Calu3 (cell line): ENCODE measurements at regions of chr15 and their contacts with region 1.

Region 1: DNA sequence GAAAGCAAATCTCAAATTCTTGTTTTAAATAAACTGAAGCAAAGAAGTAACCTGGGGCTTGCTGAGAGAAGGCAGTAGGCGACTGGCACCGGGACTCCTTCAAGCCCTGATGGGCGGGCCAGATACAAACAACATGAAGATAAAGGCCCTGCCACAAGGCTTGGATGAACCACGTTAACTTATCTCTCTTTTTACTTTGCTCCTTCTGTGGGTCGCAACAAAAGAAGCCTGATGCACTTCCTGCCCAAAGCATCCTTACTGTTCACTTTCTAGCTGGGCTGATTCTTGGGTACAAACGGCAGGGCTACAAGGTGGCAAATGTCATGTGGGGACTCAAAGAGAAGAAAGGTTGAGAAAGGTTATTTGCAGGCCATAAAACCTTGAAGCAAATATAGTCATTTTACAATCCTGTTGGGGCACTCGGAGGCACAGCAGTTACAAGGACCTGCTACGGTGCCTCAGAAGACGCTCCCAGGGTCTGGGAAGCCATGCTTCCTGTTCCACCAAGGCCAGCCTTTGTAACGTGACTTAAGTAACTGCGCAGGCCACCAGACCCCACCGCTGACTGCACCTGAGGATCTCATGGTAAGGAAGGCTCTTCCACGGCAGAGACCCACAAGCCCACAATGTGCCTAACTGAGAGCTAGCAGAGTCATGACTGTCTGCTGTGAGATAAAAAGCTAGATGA is 71.1 kb downstream of the CHSY1 start:
- DNase-seq: no peak
- H3K4me3 Mint-ChIP-seq: no peak overlapping the region
- H3K27ac Mint-ChIP-seq: no peak overlapping the region
- H3K4me1 Mint-ChIP-seq: no peaks in the 10 kb centered on the region
- H3K27me3 Mint-ChIP-seq: no peaks in the 10 kb centered on the region
- CTCF ChIP-seq: no peak

Region 2: GRCh38 chr15:100721770-100722550 is 458.8 kb before region 1 on chr15:
- CTCF ChIA-PET with region 1: no interaction called
- intact Hi-C with region 1: no loop called
- DNase-seq: peak; percentile 89
- H3K4me3 Mint-ChIP-seq: peak overlapping the region; percentile 48
- H3K27ac Mint-ChIP-seq: peak overlapping the region; percentile 97
- H3K4me1 Mint-ChIP-seq: peaks cover 78% of the 10 kb centered on the region
- H3K27me3 Mint-ChIP-seq: no peaks in the 10 kb centered on the region
- CTCF ChIP-seq: no peak

Region 3: GRCh38 chr15:101086394-101087171 is 94.2 kb before region 1 on chr15:
- CTCF ChIA-PET with region 1: no interaction called
- intact Hi-C with region 1: no loop called
- DNase-seq: no peak
- H3K4me3 Mint-ChIP-seq: no peak overlapping the region
- H3K27ac Mint-ChIP-seq: no peak overlapping the region
- H3K4me1 Mint-ChIP-seq: no peaks in the 10 kb centered on the region
- H3K27me3 Mint-ChIP-seq: peaks cover 28% of the 10 kb centered on the region
- CTCF ChIP-seq: no peak

Region 4: GRCh38 chr15:101153809-101154656 is 26.7 kb before region 1 on chr15:
- CTCF ChIA-PET with region 1: interaction called, 10 read pairs
- intact Hi-C with region 1: no loop called
- DNase-seq: no peak
- H3K4me3 Mint-ChIP-seq: no peak overlapping the region
- H3K27ac Mint-ChIP-seq: no peak overlapping the region
- H3K4me1 Mint-ChIP-seq: no peaks in the 10 kb centered on the region
- H3K27me3 Mint-ChIP-seq: no peaks in the 10 kb centered on the region
- CTCF ChIP-seq: no peak